Activated naive CD4-positive, alpha-beta T cell treated with anti-CD3 and anti-CD28 coated beads for 36 hours (primary cell): ENCODE measurements at regions of chr6 and their contacts with region 1.

Region 1: GRCh38 chr6:80214436-80215022 is 108.1 kb downstream of the BCKDHB start:
- DNase-seq: peak; percentile 14
- H3K4me3 Mint-ChIP-seq: no peak overlapping the region
- H3K27ac Mint-ChIP-seq: no peak overlapping the region
- H3K4me1 Mint-ChIP-seq: peaks cover 5% of the 10 kb centered on the region
- H3K27me3 Mint-ChIP-seq: no peaks in the 10 kb centered on the region

Region 2: DNA sequence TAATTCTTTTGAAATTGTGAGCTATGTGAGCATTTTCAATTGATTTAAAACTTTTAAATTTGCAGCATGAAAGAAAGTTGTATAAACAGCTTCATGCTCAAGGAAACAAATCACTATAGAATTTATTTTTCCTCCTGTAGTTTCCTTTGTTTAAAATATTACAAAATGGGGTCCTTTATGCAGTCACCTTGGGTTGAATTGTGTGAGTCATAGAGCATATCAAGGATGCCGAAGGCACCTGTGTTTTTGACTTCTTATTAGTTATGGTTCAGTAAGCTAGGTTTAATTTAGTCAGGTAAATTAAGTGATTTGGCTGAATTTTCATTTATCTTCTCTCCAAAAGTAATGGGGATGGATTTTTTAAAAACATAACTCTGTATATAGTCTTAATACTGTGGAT is 11.2 kb before region 1 on chr6:
- CTCF ChIA-PET with region 1: interaction called, 12 read pairs
- intact Hi-C with region 1: no loop called
- DNase-seq: no peak
- H3K4me3 Mint-ChIP-seq: no peak overlapping the region
- H3K27ac Mint-ChIP-seq: no peak overlapping the region
- H3K4me1 Mint-ChIP-seq: no peaks in the 10 kb centered on the region
- H3K27me3 Mint-ChIP-seq: no peaks in the 10 kb centered on the region

Region 3: DNA sequence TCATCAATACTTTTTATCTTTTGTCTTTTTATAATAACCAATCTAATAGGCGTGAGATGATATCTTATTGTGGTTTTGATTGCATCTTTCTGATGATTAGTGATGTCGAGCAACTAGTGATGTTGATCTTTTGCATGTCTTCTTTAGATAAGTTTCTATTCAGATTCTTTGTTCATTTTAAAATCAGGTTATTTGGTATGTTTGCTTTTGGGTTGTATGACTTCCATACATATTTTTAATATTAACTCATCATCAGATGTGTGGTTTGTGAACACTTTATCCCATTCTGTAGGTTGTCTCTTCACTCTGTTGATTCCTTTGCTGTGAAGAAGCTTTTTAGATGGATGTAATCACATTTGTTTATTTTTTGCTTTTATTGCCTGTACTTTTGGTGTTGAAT is 187.7 kb after region 1 on chr6:
- CTCF ChIA-PET with region 1: no interaction called
- intact Hi-C with region 1: no loop called
- DNase-seq: no peak
- H3K4me3 Mint-ChIP-seq: no peak overlapping the region
- H3K27ac Mint-ChIP-seq: no peak overlapping the region
- H3K4me1 Mint-ChIP-seq: no peaks in the 10 kb centered on the region
- H3K27me3 Mint-ChIP-seq: no peaks in the 10 kb centered on the region

Region 4: DNA sequence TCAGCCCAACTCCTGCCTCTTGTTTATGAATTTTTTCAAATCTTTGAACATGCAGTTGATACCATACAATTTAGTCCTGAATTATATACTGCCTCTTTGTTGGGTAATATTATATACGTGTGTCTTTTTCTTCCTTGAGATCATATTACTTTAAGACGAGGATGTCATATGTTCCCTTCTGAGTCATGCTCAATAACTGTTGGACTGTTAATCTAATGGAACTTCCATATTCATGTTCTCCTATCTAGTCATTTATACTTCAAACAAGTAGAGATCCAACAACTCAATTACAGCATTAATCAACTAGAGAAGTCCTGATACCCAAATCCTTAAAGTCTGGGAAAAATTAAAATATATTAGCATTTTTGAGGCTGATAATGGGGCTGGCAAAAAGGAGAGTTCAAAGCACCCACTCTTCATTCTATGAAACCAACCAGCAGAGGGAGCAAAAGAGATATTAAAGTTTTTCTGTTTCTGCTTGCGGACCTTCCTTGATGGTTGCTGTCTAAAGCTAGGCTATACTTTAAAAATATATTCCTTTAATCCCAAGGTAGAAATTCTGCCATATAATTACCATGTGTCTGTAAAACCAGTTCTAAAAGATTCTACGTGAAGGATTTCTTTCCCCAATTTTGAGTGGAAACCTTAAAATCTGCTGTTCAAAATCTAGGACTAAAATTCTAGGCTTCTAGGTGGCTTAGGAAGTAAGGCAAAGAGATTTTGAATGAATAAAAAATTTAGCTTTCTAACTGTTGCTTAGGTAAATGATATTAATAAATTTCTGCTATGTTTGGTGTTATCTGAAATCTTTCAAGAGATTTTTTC is 390.8 kb after region 1 on chr6:
- CTCF ChIA-PET with region 1: no interaction called
- intact Hi-C with region 1: loop called (anchors 5 kb)
- DNase-seq: no peak
- H3K4me3 Mint-ChIP-seq: no peak overlapping the region
- H3K27ac Mint-ChIP-seq: no peak overlapping the region
- H3K4me1 Mint-ChIP-seq: no peaks in the 10 kb centered on the region
- H3K27me3 Mint-ChIP-seq: peaks cover 14% of the 10 kb centered on the region

Region 5: GRCh38 chr6:81465859-81466258 is 1251.3 kb after region 1 on chr6:
- CTCF ChIA-PET with region 1: no interaction called
- intact Hi-C with region 1: loop called (anchors 10 kb)
- DNase-seq: no peak
- H3K4me3 Mint-ChIP-seq: no peak overlapping the region
- H3K27ac Mint-ChIP-seq: no peak overlapping the region
- H3K4me1 Mint-ChIP-seq: no peaks in the 10 kb centered on the region
- H3K27me3 Mint-ChIP-seq: no peaks in the 10 kb centered on the region